ENCODE measurements at regions of chr5 and their contacts with region 1.

Region 1: GRCh38 chr5:73902327-73903051 is 276.5 kb downstream of the ARHGEF28 start:
- DNase-seq: peak in 2 of 4 donors; percentile 36 to 73
- ATAC-seq: peak; percentile 86
- H3K4me3 ChIP-seq: no peak overlapping the region
- H3K27ac ChIP-seq: no peak overlapping the region
- H3K4me1 ChIP-seq: peaks cover 6% of the 10 kb centered on the region in 2 donors
- H3K27me3 ChIP-seq: no peaks in the 10 kb centered on the region
- CTCF ChIP-seq: peak; percentile 79 to 84

Region 2: DNA sequence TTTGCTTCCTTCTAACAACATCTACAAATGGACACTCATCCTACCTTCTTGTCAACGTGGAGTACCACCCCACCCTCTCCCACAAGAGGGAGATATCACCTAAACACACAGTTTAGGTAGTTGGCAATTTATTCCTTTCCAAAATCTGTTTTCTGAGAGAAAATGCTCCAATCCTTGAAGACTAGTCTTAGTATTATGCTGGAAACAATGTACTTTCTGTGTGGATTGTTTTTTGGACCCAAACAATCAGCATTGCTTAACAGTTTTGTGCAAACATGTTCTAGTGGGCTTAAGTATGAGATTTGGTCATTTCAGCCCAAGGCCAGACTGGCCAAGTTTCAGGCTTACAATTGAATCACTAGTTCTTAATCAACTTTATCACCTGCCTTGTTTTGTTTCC is 82.7 kb after region 1 on chr5:
- intact Hi-C with region 1: no loop called
- DNase-seq: peak in 1 of 4 donors; percentile 29
- ATAC-seq: peak; percentile 80
- H3K4me3 ChIP-seq: no peak overlapping the region
- H3K27ac ChIP-seq: no peak overlapping the region
- H3K4me1 ChIP-seq: no peaks in the 10 kb centered on the region
- H3K27me3 ChIP-seq: no peaks in the 10 kb centered on the region
- CTCF ChIP-seq: no peak

Region 3: GRCh38 chr5:74017786-74018211 is 115.3 kb after region 1 on chr5:
- intact Hi-C with region 1: no loop called
- DNase-seq: no peak
- ATAC-seq: peak; percentile 38
- H3K4me3 ChIP-seq: no peak overlapping the region
- H3K27ac ChIP-seq: no peak overlapping the region
- H3K4me1 ChIP-seq: peaks cover 0 to 5% of the 10 kb centered on the region in 2 donors
- H3K27me3 ChIP-seq: no peaks in the 10 kb centered on the region
- CTCF ChIP-seq: no peak

Region 4: DNA sequence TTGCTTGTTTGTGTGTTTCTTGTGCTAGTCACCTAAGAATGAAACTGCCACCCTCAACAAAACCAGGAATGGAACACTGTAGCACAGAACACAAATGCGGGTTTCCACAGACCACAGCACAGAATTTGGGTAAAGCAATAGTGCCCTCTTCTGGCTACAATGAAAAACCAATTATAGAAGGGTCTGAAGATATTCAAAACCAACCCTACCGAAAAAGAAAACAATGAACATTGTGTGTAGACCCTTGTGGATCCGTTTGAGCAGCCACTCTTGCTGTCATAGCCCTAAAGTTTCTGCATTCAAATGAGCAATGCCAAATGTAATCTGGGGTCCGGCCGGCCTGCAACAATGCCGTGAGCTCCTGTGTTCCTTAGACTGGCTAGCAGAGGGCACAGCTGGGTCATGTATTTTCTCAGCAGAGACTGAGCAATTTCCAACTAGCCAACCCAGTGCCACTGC is 746.4 kb after region 1 on chr5:
- intact Hi-C with region 1: loop called (anchors 5 to 10 kb)
- DNase-seq: peak in 2 of 4 donors; percentile 63 to 71
- ATAC-seq: peak; percentile 95
- H3K4me3 ChIP-seq: no peak overlapping the region
- H3K27ac ChIP-seq: no peak overlapping the region
- H3K4me1 ChIP-seq: peaks cover 0 to 20% of the 10 kb centered on the region in 2 donors
- H3K27me3 ChIP-seq: no peaks in the 10 kb centered on the region
- CTCF ChIP-seq: peak; percentile 66 to 68

Measured in left lung (tissue), 14 donors.